Sciatic nerve (tissue), 2 donors: ENCODE measurements at regions of chr1 and their contacts with region 1.

Region 1: GRCh38 chr1:119808972-119809550 is 2.2 kb downstream of the REG4 start:
- DNase-seq: peak; percentile 84
- ATAC-seq: peak; percentile 85

Region 2: DNA sequence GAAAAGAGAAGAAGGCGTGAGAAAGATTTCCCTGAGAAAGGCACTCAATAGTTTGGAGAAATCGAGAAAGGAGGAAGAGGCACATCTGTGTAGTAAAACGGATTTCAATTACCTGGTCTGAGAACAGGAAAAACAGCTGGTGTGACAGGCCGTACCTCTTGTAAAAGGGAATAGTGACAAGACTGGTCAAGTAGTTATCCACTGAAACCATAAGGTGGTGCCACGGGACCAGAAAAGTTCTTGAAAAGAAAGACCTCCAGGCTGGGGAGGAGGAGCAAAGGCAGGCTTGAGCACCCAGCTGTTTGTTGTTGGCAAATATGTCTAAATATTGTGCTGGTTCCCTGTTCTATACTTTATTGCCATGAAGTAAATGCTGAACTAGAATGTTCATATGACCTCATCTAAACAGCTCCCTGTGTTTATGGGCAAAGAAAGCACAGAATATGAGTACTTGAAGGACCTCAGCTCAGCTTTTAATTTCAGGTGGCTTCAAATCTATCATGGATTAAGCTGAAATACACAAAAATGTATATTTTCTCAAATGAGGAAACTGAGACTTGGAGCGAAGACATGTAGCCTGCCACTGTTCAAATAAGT is 436.5 kb before region 1 on chr1:
- intact Hi-C with region 1: no loop called
- DNase-seq: no peak
- ATAC-seq: peak; percentile 65

Region 3: DNA sequence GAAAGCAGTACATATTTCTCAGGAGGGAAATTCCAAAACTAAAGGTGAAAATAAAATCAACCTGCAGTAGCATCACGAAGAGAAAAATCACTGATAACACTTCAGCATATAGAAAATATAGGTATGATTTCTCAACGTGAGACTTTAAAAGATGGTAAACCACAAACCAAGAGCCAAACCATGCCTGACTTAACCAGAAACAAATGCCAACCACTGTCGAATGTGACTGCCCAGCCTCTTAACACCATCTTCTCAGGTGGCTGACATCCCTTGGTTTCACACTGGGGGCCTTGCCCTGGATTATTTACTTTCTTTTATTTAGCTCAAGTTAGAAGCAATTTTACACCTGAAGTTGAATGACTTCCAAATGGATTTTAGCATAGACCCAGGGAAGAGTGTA is 50.5 kb before region 1 on chr1:
- intact Hi-C with region 1: loop called (anchors 10 kb)
- DNase-seq: no peak
- ATAC-seq: no peak

Region 4: DNA sequence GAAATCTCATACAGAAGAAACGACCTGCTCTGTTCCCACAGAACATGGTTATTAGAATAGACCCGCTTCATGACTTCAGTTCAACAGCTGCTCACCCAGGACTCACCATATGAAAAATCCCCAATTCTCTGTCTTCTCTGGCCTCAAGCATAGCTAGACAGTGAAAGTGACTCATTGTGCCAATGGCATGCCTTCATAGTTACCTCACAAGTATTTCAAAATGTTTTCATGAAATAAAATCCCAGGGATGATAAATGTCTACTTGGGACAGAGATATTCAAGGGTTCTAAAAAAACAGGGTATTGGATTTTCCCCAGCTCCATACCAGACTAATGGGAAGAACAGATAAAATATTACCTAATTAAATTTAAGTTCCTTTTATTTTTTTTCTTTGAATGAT is 178.1 kb after region 1 on chr1:
- intact Hi-C with region 1: no loop called
- DNase-seq: no peak
- ATAC-seq: peak; percentile 89